ENCODE measurements at regions of chr2 and their contacts with region 1.

Region 1: GRCh38 chr2:61764035-61764800 is 89.6 kb downstream of the FAM161A start:
- DNase-seq: peak; percentile 98
- H3K4me3 Mint-ChIP-seq: peak overlapping the region; percentile 91
- H3K27ac Mint-ChIP-seq: peak overlapping the region; percentile 94
- H3K4me1 Mint-ChIP-seq: peaks cover 16% of the 10 kb centered on the region
- H3K27me3 Mint-ChIP-seq: no peaks in the 10 kb centered on the region

Region 2: GRCh38 chr2:60818272-60818671 is 945.9 kb before region 1 on chr2:
- CTCF ChIA-PET with region 1: no interaction called
- intact Hi-C with region 1: loop called (anchors 5 kb)
- DNase-seq: peak; percentile 80
- H3K4me3 Mint-ChIP-seq: no peak overlapping the region
- H3K27ac Mint-ChIP-seq: peak overlapping the region; percentile 89
- H3K4me1 Mint-ChIP-seq: peaks cover 52% of the 10 kb centered on the region
- H3K27me3 Mint-ChIP-seq: no peaks in the 10 kb centered on the region

Region 3: GRCh38 chr2:61065715-61066709 is 698.2 kb before region 1 on chr2 and contains the start of gene SANBR:
- CTCF ChIA-PET with region 1: no interaction called
- intact Hi-C with region 1: loop called (anchors 1 kb)
- DNase-seq: peak; percentile 83
- H3K4me3 Mint-ChIP-seq: peak within 1 kb of the TSS; percentile 84
- H3K27ac Mint-ChIP-seq: no peak within 1 kb of the TSS
- H3K4me1 Mint-ChIP-seq: peaks cover 8% of the 10 kb centered on the region
- H3K27me3 Mint-ChIP-seq: no peaks in the 10 kb centered on the region
- total RNA-seq, gene SANBR: 1.9 to 2.1 TPM

Region 4: GRCh38 chr2:61470965-61471904 is 293.0 kb before region 1 on chr2 and contains the start of gene USP34:
- CTCF ChIA-PET with region 1: no interaction called
- intact Hi-C with region 1: loop called (anchors 1 kb)
- DNase-seq: peak; percentile 94
- H3K4me3 Mint-ChIP-seq: peak within 1 kb of the TSS; percentile 98
- H3K27ac Mint-ChIP-seq: peak within 1 kb of the TSS; percentile 97
- H3K4me1 Mint-ChIP-seq: peaks cover 31% of the 10 kb centered on the region
- H3K27me3 Mint-ChIP-seq: no peaks in the 10 kb centered on the region
- total RNA-seq, gene USP34: 59.5 to 60.4 TPM

Region 5: GRCh38 chr2:61888267-61889055 is 124.2 kb after region 1 on chr2 and contains the start of gene CCT4:
- CTCF ChIA-PET with region 1: no interaction called
- intact Hi-C with region 1: loop called (anchors 1 kb)
- DNase-seq: peak; percentile 86
- H3K4me3 Mint-ChIP-seq: peak within 1 kb of the TSS; percentile 99
- H3K27ac Mint-ChIP-seq: peak within 1 kb of the TSS; percentile 98
- H3K4me1 Mint-ChIP-seq: peaks cover 34% of the 10 kb centered on the region
- H3K27me3 Mint-ChIP-seq: no peaks in the 10 kb centered on the region
- total RNA-seq, gene CCT4: 363 to 377 TPM

Region 6: GRCh38 chr2:62306751-62307468 is 542.7 kb after region 1 on chr2:
- CTCF ChIA-PET with region 1: no interaction called
- intact Hi-C with region 1: loop called (anchors 5 kb)
- DNase-seq: peak; percentile 73
- H3K4me3 Mint-ChIP-seq: no peak overlapping the region
- H3K27ac Mint-ChIP-seq: peak overlapping the region; percentile 90
- H3K4me1 Mint-ChIP-seq: peaks cover 74% of the 10 kb centered on the region
- H3K27me3 Mint-ChIP-seq: no peaks in the 10 kb centered on the region